Naive thymus-derived CD4-positive, alpha-beta T cell (primary cell): ENCODE measurements at regions of chr1 and their contacts with region 1.

Region 1: GRCh38 chr1:173753830-173754229 is 39.0 kb downstream of the KLHL20 start:
- DNase-seq: no peak
- ATAC-seq: no peak
- H3K4me3 ChIP-seq: no peak overlapping the region
- H3K4me3 Mint-ChIP-seq: no peak overlapping the region
- H3K27ac ChIP-seq: no peak overlapping the region
- H3K27ac Mint-ChIP-seq: peak overlapping the region in 1 of 9 donors; percentile 21
- H3K4me1 ChIP-seq: no peaks in the 10 kb centered on the region
- H3K4me1 Mint-ChIP-seq: peaks cover 0 to 8% (median 0%) of the 10 kb centered on the region in 7 donors
- H3K27me3 ChIP-seq: no peaks in the 10 kb centered on the region
- H3K27me3 Mint-ChIP-seq: no peaks in the 10 kb centered on the region

Region 2: DNA sequence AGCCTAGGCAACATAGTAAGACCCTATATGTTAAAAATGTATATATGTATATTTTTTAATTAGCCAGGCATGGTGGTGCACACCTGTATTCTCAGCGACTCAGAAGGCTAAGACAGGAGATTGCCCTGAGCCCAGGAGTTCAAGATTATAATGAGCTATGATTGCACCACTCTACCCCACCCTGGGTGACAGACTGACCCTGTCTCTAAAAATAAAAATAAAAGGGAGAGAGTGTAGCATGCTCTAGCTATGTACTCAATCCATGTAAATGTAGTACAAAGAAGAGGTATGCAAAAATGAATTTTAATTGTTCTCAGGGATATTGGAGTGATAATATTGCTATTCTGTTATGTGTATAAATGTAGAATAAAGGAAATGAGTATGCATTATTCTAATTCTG is 17.7 kb after region 1 on chr1:
- CTCF ChIA-PET with region 1: no interaction called
- POLR2A ChIA-PET with region 1: no interaction called
- intact Hi-C with region 1: loop called in 1 of 2 experiments (anchors 2 kb)
- DNase-seq: no peak
- ATAC-seq: no peak
- H3K4me3 ChIP-seq: no peak overlapping the region
- H3K4me3 Mint-ChIP-seq: no peak overlapping the region
- H3K27ac ChIP-seq: no peak overlapping the region
- H3K27ac Mint-ChIP-seq: peak overlapping the region in 5 of 9 donors; percentile 0 to 69 (median 32)
- H3K4me1 ChIP-seq: no peaks in the 10 kb centered on the region
- H3K4me1 Mint-ChIP-seq: peaks cover 0 to 13% (median 6%) of the 10 kb centered on the region in 7 donors
- H3K27me3 ChIP-seq: no peaks in the 10 kb centered on the region
- H3K27me3 Mint-ChIP-seq: no peaks in the 10 kb centered on the region

Region 3: GRCh38 chr1:173997796-173998195 is 244.0 kb after region 1 on chr1:
- CTCF ChIA-PET with region 1: no interaction called
- POLR2A ChIA-PET with region 1: no interaction called
- intact Hi-C with region 1: no loop called
- DNase-seq: no peak
- ATAC-seq: no peak
- H3K4me3 ChIP-seq: no peak overlapping the region
- H3K4me3 Mint-ChIP-seq: no peak overlapping the region
- H3K27ac ChIP-seq: peak overlapping the region; percentile 20
- H3K27ac Mint-ChIP-seq: peak overlapping the region in 5 of 9 donors; percentile 1 to 76 (median 10)
- H3K4me1 ChIP-seq: peaks cover 0 to 5% of the 10 kb centered on the region in 2 donors
- H3K4me1 Mint-ChIP-seq: peaks cover 27 to 66% (median 49%) of the 10 kb centered on the region in 7 donors
- H3K27me3 ChIP-seq: no peaks in the 10 kb centered on the region
- H3K27me3 Mint-ChIP-seq: no peaks in the 10 kb centered on the region